B cell (primary cell): ENCODE measurements at regions of chr18 and their contacts with region 1.

Region 1: GRCh38 chr18:2741651-2742050 is 86.1 kb downstream of the SMCHD1 start:
- DNase-seq: no peak
- ATAC-seq: no peak
- H3K4me3 ChIP-seq: no peak overlapping the region
- H3K4me3 Mint-ChIP-seq: no peak overlapping the region
- H3K27ac ChIP-seq: no peak overlapping the region
- H3K27ac Mint-ChIP-seq: no peak overlapping the region
- H3K4me1 ChIP-seq: no peaks in the 10 kb centered on the region
- H3K4me1 Mint-ChIP-seq: no peaks in the 10 kb centered on the region
- H3K27me3 ChIP-seq: no peaks in the 10 kb centered on the region
- H3K27me3 Mint-ChIP-seq: no peaks in the 10 kb centered on the region
- CTCF ChIP-seq: no peak

Region 2: DNA sequence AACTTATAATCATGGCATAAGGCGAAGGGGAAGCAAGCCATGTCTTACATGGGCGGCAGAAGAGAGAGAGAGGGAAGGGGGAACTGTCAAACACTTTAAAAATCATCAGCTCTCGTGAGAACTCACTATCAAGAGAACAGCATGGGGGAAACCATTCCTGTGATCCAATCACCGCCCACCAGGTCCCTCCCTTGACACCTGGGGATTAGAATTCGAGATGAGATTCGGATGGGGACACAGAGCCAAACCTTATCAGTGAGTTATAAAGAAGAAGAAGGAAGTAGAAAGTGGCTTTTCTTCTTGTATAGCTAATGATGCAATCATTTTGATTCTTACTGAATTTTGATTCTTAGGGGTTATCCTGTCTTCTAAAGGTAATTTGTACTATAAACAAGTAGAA is 34.7 kb before region 1 on chr18:
- CTCF ChIA-PET with region 1: no interaction called
- POLR2A ChIA-PET with region 1: no interaction called
- intact Hi-C with region 1: loop called (anchors 1 kb)
- DNase-seq: no peak
- ATAC-seq: no peak
- H3K4me3 ChIP-seq: no peak overlapping the region
- H3K4me3 Mint-ChIP-seq: no peak overlapping the region
- H3K27ac ChIP-seq: peak overlapping the region in 1 of 2 donors; percentile 58
- H3K27ac Mint-ChIP-seq: peak overlapping the region; percentile 82
- H3K4me1 ChIP-seq: peaks cover 0 to 3% of the 10 kb centered on the region in 2 donors
- H3K4me1 Mint-ChIP-seq: peaks cover 8% of the 10 kb centered on the region
- H3K27me3 ChIP-seq: no peaks in the 10 kb centered on the region
- H3K27me3 Mint-ChIP-seq: no peaks in the 10 kb centered on the region
- CTCF ChIP-seq: no peak

Region 3: DNA sequence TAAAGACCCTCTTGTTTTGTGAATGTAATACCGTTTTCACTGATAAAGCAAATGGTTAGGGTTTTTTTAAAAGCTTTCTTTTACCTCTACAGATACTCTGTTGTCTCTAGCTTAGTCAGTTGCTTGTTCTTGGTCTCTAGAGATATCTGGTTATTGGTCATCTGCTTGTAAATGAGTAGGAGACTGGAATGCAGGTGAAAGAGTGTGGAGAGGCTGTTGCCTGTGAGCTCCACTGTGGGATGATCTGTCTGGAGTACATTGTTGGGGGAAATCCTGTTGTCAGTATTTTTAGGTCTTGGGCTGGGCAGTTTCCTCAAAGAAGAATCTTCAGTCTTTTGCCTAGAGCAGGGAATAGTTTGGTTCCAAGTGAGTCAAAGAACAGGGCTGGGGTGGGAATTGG is 18.4 kb before region 1 on chr18:
- CTCF ChIA-PET with region 1: no interaction called
- POLR2A ChIA-PET with region 1: no interaction called
- intact Hi-C with region 1: loop called (anchors 2 kb)
- DNase-seq: no peak
- ATAC-seq: no peak
- H3K4me3 ChIP-seq: no peak overlapping the region
- H3K4me3 Mint-ChIP-seq: no peak overlapping the region
- H3K27ac ChIP-seq: peak overlapping the region in 1 of 2 donors; percentile 32
- H3K27ac Mint-ChIP-seq: no peak overlapping the region
- H3K4me1 ChIP-seq: no peaks in the 10 kb centered on the region
- H3K4me1 Mint-ChIP-seq: no peaks in the 10 kb centered on the region
- H3K27me3 ChIP-seq: no peaks in the 10 kb centered on the region
- H3K27me3 Mint-ChIP-seq: no peaks in the 10 kb centered on the region
- CTCF ChIP-seq: no peak

Region 4: GRCh38 chr18:2776601-2777000 is 35.0 kb after region 1 on chr18:
- CTCF ChIA-PET with region 1: no interaction called
- POLR2A ChIA-PET with region 1: no interaction called
- intact Hi-C with region 1: loop called (anchors 5 kb)
- DNase-seq: no peak
- ATAC-seq: no peak
- H3K4me3 ChIP-seq: no peak overlapping the region
- H3K4me3 Mint-ChIP-seq: no peak overlapping the region
- H3K27ac ChIP-seq: peak overlapping the region in 1 of 2 donors; percentile 7
- H3K27ac Mint-ChIP-seq: no peak overlapping the region
- H3K4me1 ChIP-seq: no peaks in the 10 kb centered on the region
- H3K4me1 Mint-ChIP-seq: no peaks in the 10 kb centered on the region
- H3K27me3 ChIP-seq: no peaks in the 10 kb centered on the region
- H3K27me3 Mint-ChIP-seq: no peaks in the 10 kb centered on the region
- CTCF ChIP-seq: no peak